WTC11 (cell line): ENCODE measurements at regions of chr5 and their contacts with region 1.

Region 1: GRCh38 chr5:33891788-33892619 is at the start of gene ADAMTS12:
- DNase-seq: peak; percentile 70
- ATAC-seq: peak; percentile 69
- H3K4me3 Mint-ChIP-seq: peak within 1 kb of the TSS; percentile 82
- H3K27ac Mint-ChIP-seq: peak within 1 kb of the TSS; percentile 71; the same call in 1 of the 2 replicates
- H3K4me1 Mint-ChIP-seq: peaks cover 29% of the 10 kb centered on the region
- H3K27me3 Mint-ChIP-seq: peaks cover 24% of the 10 kb centered on the region
- CTCF ChIP-seq: no peak
- total RNA-seq, gene ADAMTS12: 10.2 to 13.5 TPM (median 11.5 TPM) in 3 replicates

Region 2: GRCh38 chr5:33877449-33877848 is 14.6 kb before region 1 on chr5:
- CTCF ChIA-PET with region 1: no interaction called
- POLR2A ChIA-PET with region 1: no interaction called
- DNase-seq: no peak
- ATAC-seq: no peak
- H3K4me3 Mint-ChIP-seq: no peak overlapping the region
- H3K27ac Mint-ChIP-seq: no peak overlapping the region
- H3K4me1 Mint-ChIP-seq: peaks cover 11% of the 10 kb centered on the region
- H3K27me3 Mint-ChIP-seq: no peaks in the 10 kb centered on the region
- CTCF ChIP-seq: no peak

Region 3: DNA sequence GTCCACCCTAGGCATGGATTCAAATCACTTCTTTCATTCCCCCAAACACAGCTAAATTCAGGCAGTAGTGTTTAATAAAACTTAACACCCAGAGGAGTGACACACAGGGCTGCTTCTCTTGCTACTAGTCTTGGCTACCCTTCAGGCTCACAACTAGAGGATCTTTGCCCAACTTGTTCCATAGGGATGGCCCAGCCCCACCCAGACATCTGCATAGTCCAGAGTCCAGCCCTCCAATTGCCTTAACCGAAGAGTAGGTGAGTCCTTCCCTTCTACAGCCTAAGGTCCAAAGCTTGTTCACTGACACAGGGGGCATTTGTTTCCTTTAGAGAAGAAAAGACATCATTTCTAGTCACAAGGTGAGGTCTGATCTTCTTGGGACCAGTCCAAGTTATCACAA is 29.0 kb after region 1 on chr5:
- CTCF ChIA-PET with region 1: no interaction called
- POLR2A ChIA-PET with region 1: no interaction called
- DNase-seq: no peak
- ATAC-seq: no peak
- H3K4me3 Mint-ChIP-seq: no peak overlapping the region
- H3K27ac Mint-ChIP-seq: no peak overlapping the region
- H3K4me1 Mint-ChIP-seq: no peaks in the 10 kb centered on the region
- H3K27me3 Mint-ChIP-seq: peaks cover 35% of the 10 kb centered on the region
- CTCF ChIP-seq: no peak

Region 4: DNA sequence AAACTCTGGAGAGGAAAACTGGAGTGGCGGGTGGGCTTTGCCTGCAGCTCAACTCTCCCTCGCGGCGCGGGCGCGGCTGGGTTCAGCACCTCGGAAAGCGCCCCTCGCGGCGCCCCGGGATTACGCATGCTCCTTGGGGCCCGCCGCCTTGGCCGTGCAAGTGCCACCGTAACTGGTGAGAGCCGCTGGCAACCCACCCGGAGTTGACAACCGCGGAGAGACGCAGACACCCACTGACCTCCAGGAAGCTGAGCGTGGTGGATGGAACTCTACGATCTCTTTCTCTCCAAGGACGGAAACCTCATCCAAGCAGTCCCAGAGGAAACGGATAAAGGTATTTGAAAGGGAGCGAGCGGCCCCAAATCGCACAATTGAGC is 44.0 kb after region 1 on chr5:
- CTCF ChIA-PET with region 1: interaction called, 36 read pairs
- POLR2A ChIA-PET with region 1: interaction called, 3 read pairs
- DNase-seq: peak; percentile 87
- ATAC-seq: peak; percentile 71
- H3K4me3 Mint-ChIP-seq: peak overlapping the region; percentile 82
- H3K27ac Mint-ChIP-seq: no peak overlapping the region
- H3K4me1 Mint-ChIP-seq: peaks cover 25% of the 10 kb centered on the region
- H3K27me3 Mint-ChIP-seq: peaks cover 29% of the 10 kb centered on the region
- CTCF ChIP-seq: no peak